Common myeloid progenitor, CD34-positive (primary cell): ENCODE measurements at regions of chr18 and their contacts with region 1.

Region 1: GRCh38 chr18:77000527-77000926 is 132.1 kb downstream of the MBP start:
- DNase-seq: peak; percentile 44 to 61 (median 46)
- H3K4me3 ChIP-seq: no peak overlapping the region
- H3K27ac ChIP-seq: no peak overlapping the region
- H3K4me1 ChIP-seq: peaks cover 3 to 26% (median 16%) of the 10 kb centered on the region in 4 experiments
- H3K27me3 ChIP-seq: no peaks in the 10 kb centered on the region

Region 2: DNA sequence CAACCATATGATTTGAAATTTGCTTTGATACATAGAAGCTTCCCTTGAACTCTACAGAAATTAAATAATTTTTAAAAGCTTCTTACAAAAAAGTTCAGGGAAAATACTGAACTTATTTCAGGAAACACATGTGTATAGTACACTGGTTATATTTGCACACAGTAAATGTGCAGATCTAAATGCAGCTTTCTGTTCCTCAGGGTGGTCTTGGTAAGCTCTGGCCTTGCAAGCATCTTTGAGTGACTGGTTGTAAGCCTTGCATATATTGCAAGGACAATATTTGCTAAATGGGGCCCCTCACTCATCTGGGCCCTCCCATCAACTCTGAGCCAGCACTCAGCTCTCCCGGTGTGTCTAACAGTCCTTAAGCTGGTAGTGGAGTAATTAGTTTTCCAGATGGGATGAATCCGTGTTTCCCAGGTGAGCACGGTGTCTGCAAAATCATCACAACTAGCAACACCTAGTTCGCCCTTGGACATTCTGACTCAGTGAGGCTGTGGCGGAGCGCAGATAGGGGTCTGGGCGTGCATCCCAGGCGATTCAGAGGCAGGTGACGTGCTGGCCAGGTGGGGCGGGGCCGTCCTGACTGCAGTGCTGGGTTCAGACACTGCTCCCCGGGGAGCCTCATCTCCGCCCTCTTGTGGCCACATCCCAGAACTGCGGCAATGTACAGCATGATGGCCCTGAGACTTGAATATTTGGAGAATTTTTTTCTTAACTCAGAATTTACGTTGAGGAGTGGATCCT is 17.5 kb before region 1 on chr18:
- CTCF ChIA-PET with region 1: interaction called, 21 read pairs
- POLR2A ChIA-PET with region 1: no interaction called
- DNase-seq: peak; percentile 75 to 88 (median 85)
- H3K4me3 ChIP-seq: peak overlapping the region in 2 of 7 experiments; percentile 32 to 46
- H3K27ac ChIP-seq: no peak overlapping the region
- H3K4me1 ChIP-seq: peaks cover 0 to 10% (median 4%) of the 10 kb centered on the region in 4 experiments
- H3K27me3 ChIP-seq: no peaks in the 10 kb centered on the region

Region 3: DNA sequence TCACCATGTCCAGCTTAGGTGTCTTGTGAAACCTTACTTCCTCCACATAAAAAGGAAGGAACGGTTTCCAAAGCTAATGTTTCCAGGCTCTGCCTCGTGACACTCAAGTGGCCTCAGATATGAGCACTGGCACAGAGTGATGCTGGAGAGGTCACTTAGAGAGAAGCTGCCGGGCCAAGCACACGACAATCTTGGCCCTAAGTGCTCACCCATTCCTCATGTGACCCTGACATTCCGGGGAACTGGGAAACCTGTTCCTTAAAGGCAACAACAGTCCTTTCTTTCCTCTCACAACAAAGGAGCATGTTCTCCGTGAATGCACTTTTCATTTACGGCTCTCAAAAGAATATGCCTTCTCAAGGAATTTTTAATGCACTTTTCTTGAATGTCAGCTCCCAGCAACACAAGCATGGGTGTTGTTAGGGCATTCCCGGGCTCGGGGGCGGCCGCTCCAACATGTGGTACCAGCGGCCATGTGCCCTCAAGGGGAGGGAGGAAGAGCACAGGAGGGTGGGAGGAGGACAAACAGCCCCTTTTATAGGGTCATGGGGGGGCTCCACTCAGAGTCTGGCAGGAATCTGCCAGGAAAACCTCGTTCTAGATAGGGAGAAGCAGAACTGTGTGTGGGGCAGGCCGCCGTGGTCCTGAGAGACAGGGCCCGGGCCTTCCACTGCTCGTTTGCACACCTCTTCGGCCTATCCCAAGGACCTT is 13.4 kb after region 1 on chr18:
- CTCF ChIA-PET with region 1: interaction called, 12 read pairs
- POLR2A ChIA-PET with region 1: interaction called, 3 read pairs
- DNase-seq: no peak
- H3K4me3 ChIP-seq: no peak overlapping the region
- H3K27ac ChIP-seq: no peak overlapping the region
- H3K4me1 ChIP-seq: no peaks in the 10 kb centered on the region
- H3K27me3 ChIP-seq: no peaks in the 10 kb centered on the region

Region 4: GRCh38 chr18:77023102-77023782 is 22.7 kb after region 1 on chr18:
- CTCF ChIA-PET with region 1: interaction called, 11 read pairs
- POLR2A ChIA-PET with region 1: interaction called, 7 read pairs
- DNase-seq: peak in 1 of 3 donors; percentile 21
- H3K4me3 ChIP-seq: no peak overlapping the region
- H3K27ac ChIP-seq: no peak overlapping the region
- H3K4me1 ChIP-seq: peaks cover 0 to 4% (median 0%) of the 10 kb centered on the region in 4 experiments
- H3K27me3 ChIP-seq: no peaks in the 10 kb centered on the region

Region 5: DNA sequence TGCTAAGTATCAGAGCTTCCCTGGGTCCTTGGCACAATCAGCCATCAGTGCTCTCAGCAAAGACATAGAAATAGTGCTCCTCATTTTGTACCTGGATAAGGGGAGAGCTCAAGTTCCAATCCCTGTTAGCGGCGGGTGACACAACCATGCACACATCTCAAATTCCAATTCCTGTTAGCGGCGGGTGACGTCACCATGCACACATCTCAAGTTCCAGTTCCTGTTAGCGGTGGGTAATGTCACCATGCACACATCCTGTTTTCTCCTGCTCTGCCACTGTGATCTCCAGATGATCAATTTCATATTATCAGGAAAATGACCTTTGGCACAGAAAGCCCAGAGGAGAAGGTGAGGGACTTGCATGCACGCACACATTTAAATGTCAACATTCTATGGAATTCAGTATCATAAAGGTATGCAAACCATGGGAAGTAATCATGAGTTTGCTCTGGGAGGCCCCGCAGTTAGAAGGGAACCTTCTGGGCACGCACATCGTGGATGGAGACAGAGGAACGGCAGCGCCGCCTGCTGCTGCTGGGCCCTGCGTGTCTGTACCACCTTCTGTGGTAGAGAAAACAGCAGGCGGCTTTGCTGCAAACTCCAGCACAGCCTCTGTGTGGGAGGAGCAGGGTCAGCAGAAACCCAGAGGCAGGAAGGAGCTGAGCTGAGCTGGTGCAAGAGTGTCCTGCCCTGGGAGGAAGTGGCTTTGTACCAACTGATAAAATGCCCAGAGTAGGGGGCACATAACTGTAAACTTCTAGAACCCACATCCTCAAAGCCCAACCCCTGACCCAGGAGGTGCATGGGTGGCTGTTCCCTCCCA is 54.3 kb after region 1 on chr18:
- CTCF ChIA-PET with region 1: interaction called, 119 read pairs
- POLR2A ChIA-PET with region 1: interaction called, 3 read pairs
- DNase-seq: peak; percentile 93 to 96 (median 96)
- H3K4me3 ChIP-seq: peak overlapping the region in 6 of 7 experiments; percentile 3 to 47 (median 25)
- H3K27ac ChIP-seq: peak overlapping the region; percentile 83 to 90
- H3K4me1 ChIP-seq: peaks cover 31 to 77% (median 69%) of the 10 kb centered on the region in 4 experiments
- H3K27me3 ChIP-seq: no peaks in the 10 kb centered on the region

Region 6: GRCh38 chr18:77061946-77062517 is 61.5 kb after region 1 on chr18:
- CTCF ChIA-PET with region 1: interaction called, 119 read pairs
- POLR2A ChIA-PET with region 1: interaction called, 3 read pairs
- DNase-seq: peak; percentile 61 to 89 (median 84)
- H3K4me3 ChIP-seq: peak overlapping the region in 1 of 7 experiments; percentile 25
- H3K27ac ChIP-seq: peak overlapping the region; percentile 61 to 84
- H3K4me1 ChIP-seq: peaks cover 49 to 88% (median 75%) of the 10 kb centered on the region in 4 experiments
- H3K27me3 ChIP-seq: no peaks in the 10 kb centered on the region